Activated CD8-positive, alpha-beta T cell treated with anti-CD3 and anti-CD28 coated beads, Interleukin-2, amount 10 ng/mL, durations not matched to agents 7 days and 5 days (primary cell): ENCODE measurements at regions of chr20 and their contacts with region 1.

Region 1: DNA sequence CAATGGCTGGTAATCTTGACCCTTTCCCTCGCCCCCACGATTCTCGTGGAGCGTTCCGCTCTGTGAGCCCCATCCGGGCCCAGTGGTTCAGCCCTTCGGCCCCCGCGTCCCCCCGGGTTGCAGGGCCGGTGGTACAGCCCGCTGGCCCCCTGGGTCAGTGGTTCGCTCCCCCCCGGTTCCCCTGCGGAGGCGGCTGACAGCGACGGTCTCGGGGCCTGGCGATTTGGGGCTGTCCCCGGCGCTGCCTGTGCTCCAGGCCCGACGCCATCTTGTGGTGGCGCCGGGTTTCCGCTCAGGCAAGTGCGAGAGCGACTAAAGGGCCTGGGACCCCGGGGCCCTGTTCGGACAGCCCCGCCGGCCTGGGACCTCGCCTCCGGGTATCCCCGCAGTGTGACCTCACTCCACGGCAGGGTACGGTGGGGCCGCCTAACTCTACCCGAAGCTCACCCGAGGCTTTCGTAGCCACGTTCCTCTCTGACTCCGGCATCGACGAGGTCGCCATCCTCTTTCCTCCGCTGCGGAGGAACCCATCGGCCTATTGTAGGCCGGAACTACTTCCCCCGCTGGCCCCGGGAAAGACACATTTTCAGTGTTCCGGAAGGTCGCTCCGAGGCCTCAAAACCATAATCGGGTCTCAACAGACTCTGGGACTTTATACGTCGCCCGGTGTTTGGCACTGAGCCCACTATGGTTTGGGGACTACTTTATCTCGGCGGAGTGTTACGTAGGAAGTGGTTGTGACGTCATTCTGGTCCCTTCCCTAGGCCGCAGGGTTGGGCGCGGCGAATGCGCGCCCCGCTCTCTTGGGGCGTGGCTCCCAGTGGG is at the start of gene ZNF335:
- DNase-seq: peak; percentile 95
- ATAC-seq: peak; percentile 81
- H3K4me3 Mint-ChIP-seq: peak within 1 kb of the TSS; percentile 92
- H3K27ac Mint-ChIP-seq: peak within 1 kb of the TSS; percentile 100
- H3K4me1 Mint-ChIP-seq: peaks cover 23% of the 10 kb centered on the region
- H3K27me3 Mint-ChIP-seq: peaks cover 4% of the 10 kb centered on the region
- total RNA-seq, gene ZNF335: 33.1 to 34.5 TPM

Region 2: GRCh38 chr20:45798935-45799642 is 172.8 kb before region 1 on chr20:
- CTCF ChIA-PET with region 1: interaction called, 50 read pairs
- POLR2A ChIA-PET with region 1: no interaction called
- DNase-seq: peak; percentile 82
- ATAC-seq: peak; percentile 94
- H3K4me3 Mint-ChIP-seq: no peak overlapping the region
- H3K27ac Mint-ChIP-seq: peak overlapping the region; percentile 77
- H3K4me1 Mint-ChIP-seq: peaks cover 12% of the 10 kb centered on the region
- H3K27me3 Mint-ChIP-seq: no peaks in the 10 kb centered on the region

Region 3: GRCh38 chr20:45890985-45891983 is 80.6 kb before region 1 on chr20 and contains the starts of genes CTSA and NEURL2:
- CTCF ChIA-PET with region 1: interaction called, 14 read pairs
- POLR2A ChIA-PET with region 1: interaction called, 4 read pairs
- DNase-seq: peak; percentile 91
- ATAC-seq: peak; percentile 87
- H3K4me3 Mint-ChIP-seq: peak within 1 kb of the TSS; percentile 87
- H3K27ac Mint-ChIP-seq: peak within 1 kb of the TSS; percentile 82
- H3K4me1 Mint-ChIP-seq: peaks cover 43% of the 10 kb centered on the region
- H3K27me3 Mint-ChIP-seq: no peaks in the 10 kb centered on the region
- total RNA-seq, gene CTSA: 63.4 to 64.1 TPM
- total RNA-seq, gene NEURL2: 1.1 to 1.3 TPM

Region 4: DNA sequence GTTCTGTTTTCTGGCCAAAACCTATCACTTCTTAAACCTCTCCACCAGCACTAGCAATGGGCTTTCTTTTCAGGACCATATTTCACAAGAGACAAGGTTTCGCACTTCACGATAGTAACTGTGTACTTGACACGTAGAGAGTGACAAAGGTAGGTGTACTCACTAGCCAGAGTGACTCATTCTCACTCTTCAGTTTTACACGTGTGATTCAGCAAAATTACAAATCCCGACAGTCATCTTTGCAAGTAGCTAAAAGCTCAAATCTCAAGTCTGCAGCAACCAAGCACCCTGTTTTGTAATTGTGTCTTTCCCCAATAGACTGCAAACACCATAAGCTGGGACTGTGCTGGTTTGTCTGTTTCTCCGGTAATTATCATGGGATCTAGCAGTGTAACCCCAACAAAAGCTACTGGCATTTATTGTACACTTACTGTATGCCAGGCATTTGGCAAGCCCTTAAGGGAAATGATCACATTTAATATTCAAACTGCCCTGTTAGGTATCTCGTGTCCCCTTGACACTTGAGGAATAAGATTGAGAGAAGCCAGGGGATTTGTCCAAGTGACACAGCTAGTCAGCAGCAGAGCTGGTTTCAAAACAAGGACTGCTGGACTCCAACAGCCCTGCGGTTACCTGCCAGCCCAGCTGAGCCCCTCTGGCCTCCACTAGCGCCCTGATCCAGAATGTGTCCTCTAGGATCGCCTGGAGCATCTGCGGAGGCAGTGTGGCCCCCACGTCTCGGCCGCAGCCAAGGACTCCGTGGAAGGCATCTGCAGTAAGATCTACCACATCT is 27.5 kb before region 1 on chr20:
- CTCF ChIA-PET with region 1: interaction called, 90 read pairs
- POLR2A ChIA-PET with region 1: interaction called, 5 read pairs
- DNase-seq: no peak
- ATAC-seq: no peak
- H3K4me3 Mint-ChIP-seq: no peak overlapping the region
- H3K27ac Mint-ChIP-seq: no peak overlapping the region
- H3K4me1 Mint-ChIP-seq: peaks cover 8% of the 10 kb centered on the region
- H3K27me3 Mint-ChIP-seq: no peaks in the 10 kb centered on the region

Region 5: GRCh38 chr20:45987108-45987780 is 15.4 kb after region 1 on chr20:
- CTCF ChIA-PET with region 1: interaction called, 98 read pairs
- POLR2A ChIA-PET with region 1: interaction called, 5 read pairs
- DNase-seq: peak; percentile 84
- ATAC-seq: peak; percentile 99
- H3K4me3 Mint-ChIP-seq: no peak overlapping the region
- H3K27ac Mint-ChIP-seq: no peak overlapping the region
- H3K4me1 Mint-ChIP-seq: peaks cover 11% of the 10 kb centered on the region
- H3K27me3 Mint-ChIP-seq: peaks cover 28% of the 10 kb centered on the region

Region 6: DNA sequence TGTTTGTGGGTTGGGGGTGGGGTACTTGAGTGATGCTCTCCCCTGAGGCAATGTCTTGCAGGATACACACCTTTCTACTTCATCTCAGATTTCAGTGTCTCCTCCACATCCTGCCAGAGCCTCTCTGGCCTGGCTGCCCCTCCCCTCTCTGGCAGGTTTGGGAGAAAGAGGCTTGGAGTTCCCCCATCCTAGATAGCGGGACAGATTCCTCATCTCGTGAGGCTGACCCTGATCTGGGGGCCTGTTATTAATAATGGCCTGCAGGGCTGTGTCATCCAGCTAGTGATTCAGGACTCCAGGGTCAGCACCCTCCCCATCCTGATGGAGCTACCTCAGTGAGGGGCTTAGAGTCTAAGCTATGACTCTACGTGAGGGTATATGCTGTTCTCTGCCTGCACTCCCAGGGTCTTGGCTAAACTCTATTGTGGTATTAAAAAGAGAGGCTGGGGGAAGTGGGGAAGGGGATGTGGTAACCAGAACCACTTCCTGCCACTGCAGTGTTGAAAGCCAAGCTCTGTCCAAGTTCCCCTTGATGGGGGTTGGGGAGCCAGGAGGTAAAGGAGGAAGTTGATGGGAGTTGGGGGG is 33.1 kb after region 1 on chr20:
- CTCF ChIA-PET with region 1: interaction called, 23 read pairs
- POLR2A ChIA-PET with region 1: interaction called, 4 read pairs
- DNase-seq: peak; percentile 73
- ATAC-seq: peak; percentile 59
- H3K4me3 Mint-ChIP-seq: peak overlapping the region; percentile 57
- H3K27ac Mint-ChIP-seq: peak overlapping the region; percentile 76
- H3K4me1 Mint-ChIP-seq: peaks cover 77% of the 10 kb centered on the region
- H3K27me3 Mint-ChIP-seq: peaks cover 43% of the 10 kb centered on the region

Region 7: DNA sequence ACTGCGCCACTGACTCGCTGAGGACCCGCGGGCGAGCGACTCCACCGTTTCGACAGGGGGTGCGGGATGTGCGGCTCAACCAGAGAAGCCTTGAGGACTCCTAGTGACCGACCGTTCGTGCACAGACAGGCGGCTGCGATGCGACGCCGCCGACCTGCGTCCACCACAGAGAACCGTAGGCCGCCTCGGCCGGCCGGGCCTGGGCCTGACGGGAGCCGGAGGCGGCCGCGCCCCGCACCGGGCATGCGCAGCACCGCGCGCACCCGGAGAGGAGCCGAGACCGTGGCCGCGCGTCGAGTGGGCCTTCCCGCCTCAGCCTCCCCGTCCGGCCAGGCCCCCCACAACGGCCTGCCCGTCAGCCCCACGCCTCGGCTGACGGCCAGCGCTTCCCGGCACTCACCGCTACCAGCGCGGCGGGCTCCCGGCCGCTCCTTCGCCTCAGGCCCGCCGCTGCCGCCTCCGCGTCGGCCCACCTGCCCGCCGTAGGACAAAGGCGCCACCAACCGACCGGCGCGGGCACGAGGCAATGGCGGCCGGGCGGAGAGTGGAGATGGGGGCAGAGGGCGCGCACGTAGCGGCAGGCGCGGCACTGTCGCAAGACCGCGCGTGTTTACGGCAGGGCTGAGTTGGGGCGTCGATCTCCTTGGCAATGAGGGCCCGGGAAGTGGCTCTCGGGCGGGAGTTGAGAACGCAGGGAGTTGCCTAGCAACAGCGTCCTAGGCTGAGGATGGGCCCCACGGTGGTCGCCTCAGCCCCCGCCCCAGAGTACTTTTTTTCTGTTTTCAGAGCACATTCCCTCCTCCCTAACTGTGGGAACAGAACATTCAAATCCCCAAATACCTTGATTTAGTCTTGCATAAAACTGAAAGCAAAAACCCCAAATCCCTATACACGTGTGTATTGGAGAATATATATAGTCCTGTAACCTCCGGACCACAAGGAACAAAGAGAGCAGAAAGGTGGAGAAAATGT is 117.8 kb after region 1 on chr20 and contains the start of gene NCOA5:
- CTCF ChIA-PET with region 1: interaction called, 16 read pairs
- POLR2A ChIA-PET with region 1: no interaction called
- DNase-seq: peak; percentile 96
- ATAC-seq: peak; percentile 91
- H3K4me3 Mint-ChIP-seq: peak within 1 kb of the TSS; percentile 78
- H3K27ac Mint-ChIP-seq: peak within 1 kb of the TSS; percentile 86
- H3K4me1 Mint-ChIP-seq: peaks cover 40% of the 10 kb centered on the region
- H3K27me3 Mint-ChIP-seq: no peaks in the 10 kb centered on the region
- total RNA-seq, gene NCOA5: 30.3 to 30.9 TPM